ENCODE measurements at regions of chr9 and their contacts with region 1.

Region 1: GRCh38 chr9:91676046-91676445 is 252.4 kb upstream of the NFIL3 start:
- DNase-seq: peak; percentile 65
- H3K4me3 Mint-ChIP-seq: no peak overlapping the region
- H3K27ac Mint-ChIP-seq: peak overlapping the region; percentile 63
- H3K4me1 Mint-ChIP-seq: no peaks in the 10 kb centered on the region
- H3K27me3 Mint-ChIP-seq: no peaks in the 10 kb centered on the region
- CTCF ChIP-seq: peak; percentile 27

Region 2: GRCh38 chr9:91647371-91647770 is 28.7 kb before region 1 on chr9:
- CTCF ChIA-PET with region 1: no interaction called
- POLR2A ChIA-PET with region 1: no interaction called
- intact Hi-C with region 1: no loop called
- DNase-seq: no peak
- H3K4me3 Mint-ChIP-seq: no peak overlapping the region
- H3K27ac Mint-ChIP-seq: no peak overlapping the region
- H3K4me1 Mint-ChIP-seq: peaks cover 5% of the 10 kb centered on the region
- H3K27me3 Mint-ChIP-seq: no peaks in the 10 kb centered on the region
- CTCF ChIP-seq: no peak

Region 3: DNA sequence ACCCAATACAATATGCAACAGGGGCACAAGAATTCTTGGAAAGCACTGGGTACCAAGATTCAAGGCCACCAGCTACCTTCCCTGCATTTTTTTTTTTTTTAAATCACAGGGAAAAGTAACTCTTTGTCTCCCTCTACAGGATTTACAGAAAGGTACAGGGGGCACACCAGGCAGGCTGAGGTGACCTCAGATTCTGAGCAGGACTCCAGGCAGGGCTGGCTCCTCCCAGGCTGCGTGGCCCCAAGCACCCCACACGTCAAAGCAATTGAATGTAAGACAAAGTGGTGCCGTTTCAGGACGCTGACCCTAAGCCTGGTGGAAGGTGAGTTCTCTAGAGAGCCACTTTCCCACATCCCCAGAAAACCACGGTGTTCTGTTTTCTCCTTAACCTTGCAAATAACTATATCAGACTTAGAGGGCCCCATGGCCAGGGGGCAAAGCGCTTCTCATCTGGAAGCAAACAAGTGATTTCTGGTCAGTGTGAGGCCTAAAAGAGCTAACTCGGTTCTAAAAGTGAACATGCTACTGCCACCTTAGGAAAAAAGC is 51.3 kb after region 1 on chr9:
- CTCF ChIA-PET with region 1: interaction called, 4 read pairs
- POLR2A ChIA-PET with region 1: no interaction called
- intact Hi-C with region 1: loop called (anchors 10 kb)
- DNase-seq: peak; percentile 62
- H3K4me3 Mint-ChIP-seq: no peak overlapping the region
- H3K27ac Mint-ChIP-seq: no peak overlapping the region
- H3K4me1 Mint-ChIP-seq: peaks cover 14% of the 10 kb centered on the region
- H3K27me3 Mint-ChIP-seq: no peaks in the 10 kb centered on the region
- CTCF ChIP-seq: peak; percentile 63

Measured in MCF 10A (cell line).